MCF 10A (cell line): ENCODE measurements at regions of chr2 and their contacts with region 1.

Region 1: DNA sequence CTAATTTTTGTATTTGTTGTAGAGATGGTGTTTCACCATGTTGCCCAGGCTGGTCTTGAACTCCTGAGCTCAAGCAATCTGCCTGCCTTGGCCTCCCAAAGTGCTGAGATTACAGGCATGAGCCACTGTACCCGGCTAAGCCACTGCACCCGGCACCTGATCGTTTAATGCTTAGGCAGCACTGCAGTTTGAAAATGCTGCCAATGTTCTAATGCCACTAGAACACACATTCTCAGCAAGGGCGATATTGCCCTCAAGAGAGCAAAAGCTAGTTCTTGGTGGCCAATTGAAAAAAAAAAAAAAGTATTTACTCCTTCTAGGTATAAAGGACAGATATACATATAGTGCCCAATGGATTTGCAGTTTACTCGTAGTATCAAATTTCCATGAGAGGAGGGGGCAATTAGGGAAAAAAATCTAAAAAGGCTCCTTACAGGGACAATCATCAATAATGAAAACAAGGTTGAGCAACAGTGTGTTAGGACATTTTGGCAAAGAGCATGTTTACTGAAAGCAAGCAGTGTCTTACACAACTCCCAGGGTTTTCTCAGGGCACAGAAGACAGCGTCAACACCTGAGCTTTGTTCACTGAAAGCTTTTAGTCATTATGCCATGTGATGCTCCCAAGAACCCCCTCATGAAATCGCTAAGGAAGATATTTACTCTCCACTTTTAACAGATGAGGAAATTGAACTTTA is 199.9 kb upstream of the PKDCC start:
- DNase-seq: peak; percentile 91
- H3K4me3 Mint-ChIP-seq: peak overlapping the region; percentile 8
- H3K27ac Mint-ChIP-seq: peak overlapping the region; percentile 89
- H3K4me1 Mint-ChIP-seq: peaks cover 15% of the 10 kb centered on the region
- H3K27me3 Mint-ChIP-seq: peaks cover 36% of the 10 kb centered on the region
- CTCF ChIP-seq: no peak

Region 2: GRCh38 chr2:41859615-41860520 is 12.0 kb after region 1 on chr2:
- CTCF ChIA-PET with region 1: interaction called, 76 read pairs
- POLR2A ChIA-PET with region 1: interaction called, 18 read pairs
- intact Hi-C with region 1: no loop called
- DNase-seq: peak; percentile 66
- H3K4me3 Mint-ChIP-seq: no peak overlapping the region
- H3K27ac Mint-ChIP-seq: peak overlapping the region; percentile 78
- H3K4me1 Mint-ChIP-seq: peaks cover 14% of the 10 kb centered on the region
- H3K27me3 Mint-ChIP-seq: no peaks in the 10 kb centered on the region
- CTCF ChIP-seq: no peak